Activated CD4-positive, alpha-beta memory T cell treated with anti-CD3 and anti-CD28 coated beads, Interleukin-2, amount 10 ng/mL, durations not matched to agents 7 days and 5 days (primary cell): ENCODE measurements at regions of chr6 and their contacts with region 1.

Region 1: GRCh38 chr6:158819213-158819909 is at the start of gene EZR:
- DNase-seq: peak; percentile 82
- H3K4me3 Mint-ChIP-seq: peak within 1 kb of the TSS; percentile 99
- H3K27ac Mint-ChIP-seq: peak within 1 kb of the TSS; percentile 77
- H3K4me1 Mint-ChIP-seq: peaks cover 28% of the 10 kb centered on the region
- H3K27me3 Mint-ChIP-seq: no peaks in the 10 kb centered on the region
- total RNA-seq, gene EZR: 225 to 228 TPM

Region 2: GRCh38 chr6:158808941-158809678 is 10.3 kb before region 1 on chr6:
- CTCF ChIA-PET with region 1: no interaction called
- POLR2A ChIA-PET with region 1: interaction called, 19 read pairs
- DNase-seq: peak; percentile 36
- H3K4me3 Mint-ChIP-seq: no peak overlapping the region
- H3K27ac Mint-ChIP-seq: peak overlapping the region; percentile 67
- H3K4me1 Mint-ChIP-seq: peaks cover 94% of the 10 kb centered on the region
- H3K27me3 Mint-ChIP-seq: no peaks in the 10 kb centered on the region

Region 3: DNA sequence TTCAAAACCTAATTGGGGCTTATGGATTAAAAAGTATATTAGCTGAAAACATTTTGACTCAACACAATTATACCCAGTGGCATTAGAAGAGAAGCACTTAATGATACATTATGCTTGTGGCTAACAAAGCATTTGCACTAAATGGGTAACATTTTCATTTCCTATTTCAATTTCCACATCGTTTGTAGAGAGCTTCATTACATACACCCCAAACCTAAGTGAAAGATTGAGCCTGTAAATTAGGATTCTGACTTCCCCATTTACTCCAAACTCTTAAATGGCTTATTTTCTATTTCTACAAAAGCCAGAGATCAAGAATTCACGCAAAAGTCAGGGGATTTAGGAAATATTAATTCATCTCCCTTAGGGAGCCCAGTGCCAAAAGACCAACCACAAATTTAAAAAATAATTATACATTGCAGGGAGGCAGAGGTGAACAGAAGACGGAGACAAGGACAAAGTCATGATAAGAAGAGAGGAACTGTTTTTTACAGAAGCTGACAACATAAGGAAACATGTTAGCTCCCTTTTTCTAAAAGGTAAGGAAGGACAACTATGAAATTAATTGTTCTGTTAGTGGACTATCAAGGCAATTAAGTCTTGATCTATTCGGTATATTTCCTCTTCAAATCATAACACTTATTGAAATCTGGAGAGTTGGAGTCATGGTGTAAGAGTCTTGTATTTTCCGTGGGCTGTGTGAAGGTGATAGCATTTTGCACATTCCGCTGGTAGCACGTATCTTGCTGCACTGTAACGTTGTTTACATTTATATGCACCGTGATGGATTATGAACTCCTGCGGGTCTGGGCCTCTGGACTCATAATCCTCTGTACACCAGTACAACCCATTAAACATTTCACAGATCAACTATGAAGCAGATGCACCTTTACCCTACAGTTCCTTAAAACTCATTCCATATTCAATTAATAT is 24.7 kb after region 1 on chr6:
- CTCF ChIA-PET with region 1: interaction called, 3 read pairs
- POLR2A ChIA-PET with region 1: interaction called, 10 read pairs
- DNase-seq: no peak
- H3K4me3 Mint-ChIP-seq: no peak overlapping the region
- H3K27ac Mint-ChIP-seq: no peak overlapping the region
- H3K4me1 Mint-ChIP-seq: peaks cover 5% of the 10 kb centered on the region
- H3K27me3 Mint-ChIP-seq: peaks cover 19% of the 10 kb centered on the region

Region 4: GRCh38 chr6:158853072-158853871 is 33.9 kb after region 1 on chr6:
- CTCF ChIA-PET with region 1: no interaction called
- POLR2A ChIA-PET with region 1: interaction called, 64 read pairs
- DNase-seq: peak; percentile 90
- H3K4me3 Mint-ChIP-seq: no peak overlapping the region
- H3K27ac Mint-ChIP-seq: no peak overlapping the region
- H3K4me1 Mint-ChIP-seq: peaks cover 36% of the 10 kb centered on the region
- H3K27me3 Mint-ChIP-seq: peaks cover 6% of the 10 kb centered on the region

Region 5: DNA sequence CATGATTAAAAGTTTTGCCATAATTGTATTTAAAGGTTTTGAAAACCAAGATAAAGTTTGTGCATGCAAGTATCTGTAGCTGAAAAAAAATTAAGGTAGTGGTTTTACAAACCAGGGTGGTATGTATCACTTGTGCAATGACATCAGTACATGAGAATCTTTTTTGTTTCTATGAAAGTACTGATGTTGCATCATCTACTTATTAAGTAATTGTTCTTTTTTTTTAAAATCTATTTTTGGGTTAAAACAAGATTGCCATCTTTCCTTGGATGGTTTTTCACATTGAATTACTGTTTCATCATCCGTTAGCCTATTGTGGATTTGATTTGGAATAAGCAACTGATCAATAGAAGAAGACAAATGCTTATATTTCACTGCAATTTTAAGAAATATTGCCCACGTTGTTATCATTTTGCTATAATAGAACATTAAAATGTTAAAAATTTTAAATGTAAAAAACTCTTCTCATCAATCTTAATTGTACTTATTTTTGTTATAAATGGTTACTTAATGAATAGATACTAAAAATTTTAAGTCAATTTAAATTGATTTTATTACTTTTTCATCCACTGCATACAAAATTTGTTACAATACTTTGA is 265.2 kb after region 1 on chr6:
- CTCF ChIA-PET with region 1: no interaction called
- POLR2A ChIA-PET with region 1: no interaction called
- DNase-seq: no peak
- H3K4me3 Mint-ChIP-seq: no peak overlapping the region
- H3K27ac Mint-ChIP-seq: no peak overlapping the region
- H3K4me1 Mint-ChIP-seq: peaks cover 5% of the 10 kb centered on the region
- H3K27me3 Mint-ChIP-seq: no peaks in the 10 kb centered on the region